AG04449 (cell line): ENCODE measurements at regions of chr19 and their contacts with region 1.

Region 1: DNA sequence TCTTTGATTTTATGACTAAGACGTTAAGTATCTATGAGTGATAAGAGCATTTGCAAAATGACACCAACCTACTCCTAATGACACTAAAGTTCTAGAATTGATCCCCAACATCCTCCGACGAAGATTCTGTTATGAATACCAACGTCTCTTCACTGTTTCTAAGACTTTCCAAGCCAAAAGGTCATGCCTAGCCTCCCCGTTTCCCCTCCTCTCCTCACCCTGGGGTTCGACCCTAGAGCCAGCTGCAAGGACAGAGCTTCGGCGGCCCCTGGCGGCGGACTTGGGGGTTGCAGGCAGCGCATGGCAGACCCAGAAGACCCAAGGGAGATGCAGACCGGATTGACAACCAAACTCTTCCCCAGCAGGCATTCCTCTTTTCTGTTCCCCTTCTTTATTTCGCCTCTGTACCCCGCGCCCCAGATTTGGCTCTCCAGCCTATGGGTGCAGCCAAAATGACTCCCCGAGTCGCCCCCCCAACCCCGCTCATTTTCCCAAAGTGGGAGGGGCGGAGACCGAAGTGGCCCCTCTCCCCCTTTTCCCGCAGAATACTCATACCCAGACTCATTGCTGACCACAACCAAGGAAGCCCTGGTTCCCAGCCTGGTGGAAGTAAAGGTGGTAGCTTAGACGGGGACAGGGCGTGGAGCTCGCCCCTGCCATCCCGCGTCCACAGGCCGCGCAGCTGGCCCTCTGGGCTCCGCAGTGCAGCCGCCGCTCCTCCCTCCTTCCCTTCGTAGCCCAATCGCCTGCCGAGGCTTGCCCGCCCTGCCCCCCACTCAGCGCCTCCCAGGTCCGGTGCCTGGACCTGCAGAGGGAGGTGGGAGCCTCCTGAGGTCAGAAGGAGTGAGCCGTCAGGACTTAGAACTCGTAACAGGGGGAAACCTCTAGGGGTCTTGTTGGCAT is 4.1 kb upstream of the EML2 start:
- DNase-seq: no peak
- H3K4me3 ChIP-seq: peak overlapping the region; percentile 25; the same call in 1 of the 2 replicates
- CTCF ChIP-seq: peak; percentile 99

Region 2: DNA sequence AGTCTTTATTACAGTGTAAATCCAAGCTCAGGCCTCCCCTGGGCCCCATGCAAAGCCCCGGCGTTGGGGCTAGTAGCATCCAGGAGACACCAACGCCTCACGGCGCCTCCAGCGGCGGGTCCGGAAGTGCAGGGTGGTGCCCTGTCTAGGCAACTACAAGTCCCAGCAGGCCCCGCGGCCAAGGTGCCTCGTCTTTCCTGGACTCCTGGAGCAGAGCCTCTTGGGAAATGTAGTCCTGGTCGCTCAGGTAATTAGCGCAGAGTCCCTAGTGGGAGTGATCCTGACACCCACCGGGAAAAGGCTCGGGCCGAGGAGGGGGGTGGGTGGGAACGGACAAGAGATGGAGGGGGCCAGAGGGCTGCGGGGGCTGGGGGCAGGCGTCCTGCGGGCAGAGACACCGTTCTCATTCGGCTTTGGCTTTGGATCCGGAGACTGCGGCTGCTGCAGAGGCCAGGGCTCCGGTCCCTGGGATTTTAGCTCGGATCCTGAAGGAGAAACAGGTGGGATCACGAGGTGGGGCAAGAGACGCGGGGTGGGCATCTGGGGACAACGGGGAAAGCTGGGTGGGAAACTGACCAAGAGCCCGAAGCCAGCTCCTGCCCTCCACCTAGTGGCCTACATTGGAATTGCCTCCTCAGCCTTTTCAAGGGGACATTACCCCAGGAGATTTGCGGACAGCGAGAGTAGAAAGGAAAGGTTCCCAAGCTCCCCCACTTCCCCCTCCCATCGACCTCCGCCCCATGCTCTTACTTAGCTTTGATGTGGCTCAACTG is 157.8 kb before region 1 on chr19:
- CTCF ChIA-PET with region 1: interaction called, 39 read pairs
- POLR2A ChIA-PET with region 1: interaction called, 3 read pairs
- DNase-seq: no peak
- H3K4me3 ChIP-seq: peak overlapping the region; percentile 83
- CTCF ChIP-seq: peak; percentile 93

Region 3: GRCh38 chr19:45591004-45591637 is 52.2 kb before region 1 on chr19:
- CTCF ChIA-PET with region 1: interaction called, 22 read pairs
- POLR2A ChIA-PET with region 1: no interaction called
- DNase-seq: no peak
- H3K4me3 ChIP-seq: no peak overlapping the region
- CTCF ChIP-seq: peak; percentile 56

Region 4: DNA sequence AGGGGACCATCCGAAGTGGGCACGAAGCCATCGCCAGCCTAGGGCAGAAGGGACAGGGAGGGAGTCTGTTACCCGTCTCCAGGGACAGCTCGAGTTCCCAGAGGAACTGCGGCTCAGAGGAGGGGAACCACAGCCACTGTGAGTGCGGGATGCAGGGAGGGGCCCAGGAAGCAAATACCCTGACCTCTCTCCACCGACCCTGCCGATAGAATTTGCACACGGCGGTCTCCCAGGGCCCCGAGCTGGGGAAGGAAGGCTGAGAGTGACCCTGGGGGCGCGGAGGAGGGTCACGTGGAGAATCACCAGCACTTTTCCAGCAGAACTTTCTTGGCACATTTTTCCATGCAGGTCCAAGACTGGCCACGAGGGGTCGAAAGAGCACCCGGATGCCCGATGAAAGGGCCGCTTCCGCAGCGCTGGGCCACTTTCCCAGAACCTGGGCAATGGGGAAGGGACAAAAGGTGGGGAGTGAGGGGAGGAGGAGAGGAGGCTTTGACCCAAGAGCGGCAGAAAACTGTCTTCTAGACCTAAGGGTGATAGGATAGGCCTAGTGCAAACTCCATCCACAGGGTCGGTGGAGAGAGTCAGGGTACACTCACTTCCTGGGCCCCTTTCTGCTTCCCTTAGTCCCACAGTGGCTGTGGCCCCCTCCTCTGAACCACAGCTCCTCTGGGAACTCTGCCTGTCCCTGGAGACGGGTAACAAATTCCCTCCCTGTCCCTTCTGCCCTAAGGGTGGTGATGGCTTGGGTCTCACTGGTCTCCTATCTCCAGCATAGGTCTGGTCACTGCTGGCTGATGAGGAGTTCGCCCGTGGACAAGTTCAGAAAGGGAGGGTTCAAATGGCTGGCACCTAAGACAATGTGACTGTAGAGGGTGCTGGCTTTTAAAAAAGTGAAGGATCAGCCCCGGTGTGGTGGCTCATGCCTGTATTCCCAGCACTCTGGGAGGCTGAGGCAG is 35.9 kb before region 1 on chr19:
- CTCF ChIA-PET with region 1: interaction called, 86 read pairs
- POLR2A ChIA-PET with region 1: interaction called, 5 read pairs
- DNase-seq: no peak
- H3K4me3 ChIP-seq: peak overlapping the region; percentile 40
- CTCF ChIP-seq: peak; percentile 91

Region 5: DNA sequence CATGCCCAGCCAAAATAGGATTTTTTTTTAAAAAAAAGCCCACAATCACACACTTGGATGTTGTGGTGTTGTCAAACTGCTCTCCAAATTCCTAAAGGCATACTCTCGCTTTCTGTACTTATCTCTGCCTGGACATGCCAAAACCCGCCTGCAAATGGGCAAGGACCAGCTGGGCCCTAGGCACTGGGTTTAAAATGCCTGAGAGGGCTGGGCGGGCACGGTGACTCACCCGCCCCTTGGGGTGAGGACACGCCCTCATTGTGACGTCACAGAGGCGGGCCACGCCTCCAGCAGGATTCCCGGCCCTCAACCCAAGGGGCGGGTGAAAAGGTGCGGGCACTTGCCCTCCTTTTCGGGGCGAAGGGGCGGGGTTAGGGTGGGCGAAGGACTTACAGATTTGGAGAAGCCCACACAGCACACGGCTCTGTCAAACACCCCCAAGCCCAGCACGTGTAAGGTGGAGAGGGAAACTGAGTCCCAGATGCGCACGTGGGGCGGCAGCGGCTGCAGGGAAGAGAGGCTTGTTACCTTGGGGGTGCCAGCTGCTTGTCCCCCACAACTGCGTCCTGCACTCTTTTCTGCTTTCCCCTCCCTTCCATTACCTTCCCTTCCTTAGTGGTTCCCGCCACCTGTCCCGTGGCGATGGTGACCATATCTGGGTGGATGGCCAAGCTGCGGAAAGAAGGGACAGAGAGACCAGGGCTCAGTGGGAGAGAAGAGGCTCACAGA is 10.6 kb before region 1 on chr19:
- CTCF ChIA-PET with region 1: interaction called, 67 read pairs
- POLR2A ChIA-PET with region 1: interaction called, 4 read pairs
- DNase-seq: peak; percentile 59
- H3K4me3 ChIP-seq: no peak overlapping the region
- CTCF ChIP-seq: no peak

Region 6: DNA sequence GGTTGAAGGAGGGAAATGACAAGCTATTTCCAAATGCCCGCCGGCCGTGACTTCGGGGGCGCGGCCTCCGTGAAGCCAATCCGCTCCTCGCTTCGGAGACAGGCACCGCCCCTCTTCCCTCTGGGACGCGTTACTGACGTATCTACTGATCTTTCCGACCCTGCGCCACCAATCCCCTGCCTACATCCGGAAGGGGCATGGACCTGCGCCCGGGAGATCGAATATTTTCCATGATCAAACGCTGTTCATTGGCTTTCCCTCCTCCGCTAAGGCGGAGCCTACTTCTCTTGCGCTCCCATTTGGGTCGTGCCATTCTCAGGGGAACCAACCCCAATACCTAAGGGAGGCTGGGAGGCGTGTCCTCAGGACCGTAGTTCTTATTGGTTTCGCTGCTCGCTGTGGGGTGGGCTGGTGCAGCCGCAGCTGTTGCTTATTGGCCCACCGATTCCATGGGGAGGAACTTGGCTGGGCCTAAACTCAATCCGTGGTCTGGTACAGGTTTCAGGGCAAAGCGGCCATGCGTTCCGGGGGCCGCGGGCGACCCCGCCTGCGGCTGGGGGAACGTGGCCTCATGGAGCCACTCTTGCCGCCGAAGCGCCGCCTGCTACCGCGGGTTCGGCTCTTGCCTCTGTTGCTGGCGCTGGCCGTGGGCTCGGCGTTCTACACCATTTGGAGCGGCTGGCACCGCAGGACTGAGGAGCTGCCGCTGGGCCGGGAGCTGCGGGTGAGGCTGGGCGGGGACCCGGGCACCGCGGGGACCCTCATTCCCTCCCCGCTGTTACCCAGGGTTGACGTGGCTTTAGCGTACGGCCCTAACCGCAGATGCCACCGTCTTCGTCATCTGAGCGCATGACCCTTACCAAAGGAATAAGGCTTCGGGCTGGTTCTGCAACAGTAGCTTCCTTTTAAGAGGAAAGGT is 49.2 kb after region 1 on chr19 and contains the start of gene QPCTL:
- CTCF ChIA-PET with region 1: interaction called, 12 read pairs
- POLR2A ChIA-PET with region 1: no interaction called
- DNase-seq: peak; percentile 99
- H3K4me3 ChIP-seq: peak within 1 kb of the TSS; percentile 95
- CTCF ChIP-seq: no peak

Region 7: GRCh38 chr19:46056536-46056935 is 413.3 kb after region 1 on chr19:
- CTCF ChIA-PET with region 1: no interaction called
- POLR2A ChIA-PET with region 1: no interaction called
- DNase-seq: no peak
- H3K4me3 ChIP-seq: no peak overlapping the region
- CTCF ChIP-seq: no peak